Activated CD4-positive, alpha-beta T cell treated with anti-CD3 and anti-CD28 coated beads for 36 hours (primary cell): ENCODE measurements at regions of chr2 and their contacts with region 1.

Region 1: GRCh38 chr2:215828517-215829184 is 184.7 kb downstream of the MREG start:
- DNase-seq: peak; percentile 69
- ATAC-seq: peak; percentile 83
- H3K4me3 Mint-ChIP-seq: no peak overlapping the region
- H3K27ac Mint-ChIP-seq: no peak overlapping the region
- H3K4me1 Mint-ChIP-seq: peaks cover 9% of the 10 kb centered on the region
- H3K27me3 Mint-ChIP-seq: no peaks in the 10 kb centered on the region

Region 2: DNA sequence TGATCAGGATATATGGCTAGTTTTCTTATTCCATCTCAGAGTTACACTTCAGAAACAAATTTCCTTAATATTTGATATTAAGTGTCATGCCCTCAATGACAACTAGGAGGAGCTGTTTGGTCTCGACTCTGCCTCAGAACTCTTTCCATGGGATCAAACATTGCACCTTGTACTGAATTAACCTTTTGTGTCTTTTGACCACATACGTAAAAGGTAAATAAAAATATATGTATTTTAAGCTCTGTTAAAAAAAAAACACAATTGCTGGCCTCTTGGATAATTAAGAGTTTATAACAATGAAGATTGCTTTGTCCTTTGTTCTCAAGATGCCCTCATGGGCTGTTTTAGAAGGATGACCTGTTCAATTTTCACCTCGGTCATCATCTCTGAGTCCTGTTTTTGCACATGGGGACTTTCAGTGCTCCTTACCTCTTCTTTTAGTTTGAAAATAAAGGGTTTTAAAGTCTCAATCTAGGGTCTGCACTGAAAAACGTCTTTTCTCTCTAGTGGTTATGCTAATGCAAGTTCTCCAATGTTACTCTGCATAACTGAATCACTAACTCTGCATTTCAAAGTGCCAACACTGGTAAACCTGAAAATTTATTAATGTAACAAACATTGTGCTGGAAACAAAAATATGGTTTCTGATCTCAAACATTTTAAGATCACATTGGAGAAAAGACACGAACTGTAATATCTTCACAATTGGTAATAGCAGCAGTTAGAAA is 374.0 kb before region 1 on chr2:
- CTCF ChIA-PET with region 1: interaction called, 4 read pairs
- POLR2A ChIA-PET with region 1: no interaction called
- intact Hi-C with region 1: loop called (anchors 1 to 2 kb)
- DNase-seq: no peak
- ATAC-seq: peak; percentile 51
- H3K4me3 Mint-ChIP-seq: no peak overlapping the region
- H3K27ac Mint-ChIP-seq: no peak overlapping the region
- H3K4me1 Mint-ChIP-seq: no peaks in the 10 kb centered on the region
- H3K27me3 Mint-ChIP-seq: peaks cover 18% of the 10 kb centered on the region

Region 3: GRCh38 chr2:215553946-215554345 is 274.7 kb before region 1 on chr2:
- CTCF ChIA-PET with region 1: no interaction called
- POLR2A ChIA-PET with region 1: no interaction called
- intact Hi-C with region 1: loop called in 1 of 2 experiments (anchors 5 kb)
- DNase-seq: peak; percentile 14
- ATAC-seq: no peak
- H3K4me3 Mint-ChIP-seq: no peak overlapping the region
- H3K27ac Mint-ChIP-seq: no peak overlapping the region
- H3K4me1 Mint-ChIP-seq: no peaks in the 10 kb centered on the region
- H3K27me3 Mint-ChIP-seq: no peaks in the 10 kb centered on the region

Region 4: DNA sequence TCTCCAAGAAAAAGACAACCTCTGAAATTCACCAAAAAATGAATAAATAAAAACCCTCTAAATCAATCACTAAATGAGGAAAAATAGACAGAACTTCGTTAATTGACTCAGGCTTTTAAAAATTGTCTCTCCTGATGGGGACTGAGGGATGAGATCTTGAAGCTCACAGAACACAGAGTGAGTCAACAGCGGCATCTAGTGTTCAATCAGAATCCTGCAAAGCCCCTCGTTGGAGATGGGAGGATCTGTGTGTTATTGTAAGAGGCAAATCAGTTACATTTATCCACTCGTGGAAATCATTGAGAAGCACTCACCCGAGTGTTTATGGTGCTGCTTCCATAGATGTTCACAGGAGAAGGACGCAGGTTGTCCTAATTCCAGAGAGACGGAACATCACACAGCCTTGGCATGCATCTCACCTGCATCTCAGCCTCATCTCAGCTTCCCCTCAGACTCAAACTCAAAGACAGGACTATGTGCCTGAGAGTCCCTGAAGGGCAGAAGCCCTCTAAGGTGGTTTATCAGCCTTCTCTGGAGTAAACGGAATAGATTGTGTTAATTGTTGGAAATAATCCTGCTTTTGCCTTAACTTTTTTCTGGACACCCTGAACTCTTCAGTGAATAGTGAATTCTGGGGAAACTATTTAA is 102.7 kb after region 1 on chr2:
- CTCF ChIA-PET with region 1: interaction called, 6 read pairs
- POLR2A ChIA-PET with region 1: no interaction called
- intact Hi-C with region 1: loop called in 1 of 2 experiments (anchors 5 kb)
- DNase-seq: peak; percentile 74
- ATAC-seq: peak; percentile 77
- H3K4me3 Mint-ChIP-seq: no peak overlapping the region
- H3K27ac Mint-ChIP-seq: no peak overlapping the region
- H3K4me1 Mint-ChIP-seq: peaks cover 9% of the 10 kb centered on the region
- H3K27me3 Mint-ChIP-seq: peaks cover 3% of the 10 kb centered on the region